ENCODE measurements at regions of chr21 and their contacts with region 1.

Region 1: DNA sequence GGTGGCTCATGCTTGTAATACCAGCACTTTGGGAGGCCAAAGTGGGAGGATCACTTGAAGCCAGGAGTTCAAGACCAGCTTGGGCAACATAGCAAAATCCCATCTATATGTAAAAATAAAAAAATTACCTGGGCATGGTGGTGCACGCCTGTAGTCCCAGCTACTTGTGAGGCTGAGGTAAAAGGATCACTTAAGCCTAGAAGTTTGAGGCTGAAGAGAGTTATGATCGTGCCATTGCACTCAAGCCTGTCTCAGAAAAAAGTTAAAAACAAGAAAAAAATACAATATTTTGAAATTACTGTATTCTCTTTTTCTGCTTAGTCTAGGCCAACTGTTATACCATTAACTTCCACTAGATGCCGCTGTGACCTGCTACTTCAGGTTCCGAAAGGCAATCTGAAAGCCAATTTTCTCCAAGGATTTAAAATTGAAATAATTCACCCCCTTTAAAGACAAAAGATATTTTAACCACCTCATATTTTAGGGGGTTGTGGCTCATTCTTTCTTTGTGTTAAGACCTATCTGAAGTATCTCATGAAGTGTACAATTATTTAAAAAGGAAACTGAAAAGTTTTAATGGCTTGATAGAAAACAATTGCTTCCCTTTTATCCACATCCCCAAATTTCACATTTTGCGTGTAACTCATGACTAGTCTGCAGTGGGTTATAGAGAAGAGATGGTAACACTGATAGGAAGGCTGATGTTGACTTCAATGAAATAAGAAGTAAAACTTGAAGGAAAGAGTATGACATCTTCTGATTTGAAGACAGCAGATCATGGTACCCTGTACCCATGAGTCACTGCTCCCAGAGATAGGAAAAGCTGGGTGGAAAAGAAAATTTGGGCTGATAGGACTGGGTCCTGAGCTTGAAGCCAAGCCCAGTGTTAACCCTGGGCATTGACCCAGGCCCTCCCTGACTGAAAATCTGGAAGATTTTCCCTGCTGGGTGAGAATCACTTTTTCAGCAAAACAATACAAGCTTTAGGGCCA is 24.4 kb upstream of the CLDN14 start:
- DNase-seq: peak; percentile 5 to 44
- ATAC-seq: no peak
- H3K4me3 ChIP-seq: no peak overlapping the region
- H3K27ac ChIP-seq: peak overlapping the region; percentile 23 to 59; a peak in 4 of 6 replicates
- H3K4me1 ChIP-seq: peaks cover 16% of the 10 kb centered on the region; the same call in 2 of the 3 replicates
- CTCF ChIP-seq: peak; percentile 76
- EP300 ChIP-seq: no peak
- POLR2A ChIP-seq: no peak
- RAD21 ChIP-seq: peak; percentile 76 to 82

Region 2: GRCh38 chr21:36419996-36420395 is 84.4 kb before region 1 on chr21:
- CTCF ChIA-PET with region 1: interaction called, 15 read pairs
- POLR2A ChIA-PET with region 1: no interaction called
- DNase-seq: peak; percentile 84 to 91
- ATAC-seq: peak; percentile 92 to 95
- H3K4me3 ChIP-seq: no peak overlapping the region
- H3K27ac ChIP-seq: peak overlapping the region; percentile 47 to 67; a peak in 4 of 6 replicates
- H3K4me1 ChIP-seq: peaks cover 13% of the 10 kb centered on the region
- CTCF ChIP-seq: peak; percentile 67
- EP300 ChIP-seq: no peak
- POLR2A ChIP-seq: no peak
- RAD21 ChIP-seq: peak; percentile 77 to 82

Region 3: GRCh38 chr21:36478207-36478701 is 26.1 kb before region 1 on chr21:
- CTCF ChIA-PET with region 1: interaction called, 13 read pairs
- POLR2A ChIA-PET with region 1: no interaction called
- DNase-seq: peak; percentile 73 to 86
- ATAC-seq: peak; percentile 95
- H3K4me3 ChIP-seq: no peak overlapping the region
- H3K27ac ChIP-seq: peak overlapping the region; percentile 87 to 94
- H3K4me1 ChIP-seq: peaks cover 37% of the 10 kb centered on the region
- CTCF ChIP-seq: no peak
- EP300 ChIP-seq: peak; percentile 33 to 50; a peak in 2 of 5 replicates
- POLR2A ChIP-seq: no peak
- RAD21 ChIP-seq: no peak

Measured in A549 (cell line).